Activated CD8-positive, alpha-beta memory T cell treated with anti-CD3 and anti-CD28 coated beads, Interleukin-2, amount 10 ng/mL, durations not matched to agents 7 days and 5 days (primary cell): ENCODE measurements at regions of chr1 and their contacts with region 1.

Region 1: GRCh38 chr1:66242646-66243547 is 291.1 kb upstream of the SGIP1 start:
- DNase-seq: peak; percentile 88
- ATAC-seq: peak; percentile 67
- H3K4me3 Mint-ChIP-seq: no peak overlapping the region
- H3K27ac Mint-ChIP-seq: no peak overlapping the region
- H3K4me1 Mint-ChIP-seq: peaks cover 21% of the 10 kb centered on the region
- H3K27me3 Mint-ChIP-seq: peaks cover 6% of the 10 kb centered on the region

Region 2: DNA sequence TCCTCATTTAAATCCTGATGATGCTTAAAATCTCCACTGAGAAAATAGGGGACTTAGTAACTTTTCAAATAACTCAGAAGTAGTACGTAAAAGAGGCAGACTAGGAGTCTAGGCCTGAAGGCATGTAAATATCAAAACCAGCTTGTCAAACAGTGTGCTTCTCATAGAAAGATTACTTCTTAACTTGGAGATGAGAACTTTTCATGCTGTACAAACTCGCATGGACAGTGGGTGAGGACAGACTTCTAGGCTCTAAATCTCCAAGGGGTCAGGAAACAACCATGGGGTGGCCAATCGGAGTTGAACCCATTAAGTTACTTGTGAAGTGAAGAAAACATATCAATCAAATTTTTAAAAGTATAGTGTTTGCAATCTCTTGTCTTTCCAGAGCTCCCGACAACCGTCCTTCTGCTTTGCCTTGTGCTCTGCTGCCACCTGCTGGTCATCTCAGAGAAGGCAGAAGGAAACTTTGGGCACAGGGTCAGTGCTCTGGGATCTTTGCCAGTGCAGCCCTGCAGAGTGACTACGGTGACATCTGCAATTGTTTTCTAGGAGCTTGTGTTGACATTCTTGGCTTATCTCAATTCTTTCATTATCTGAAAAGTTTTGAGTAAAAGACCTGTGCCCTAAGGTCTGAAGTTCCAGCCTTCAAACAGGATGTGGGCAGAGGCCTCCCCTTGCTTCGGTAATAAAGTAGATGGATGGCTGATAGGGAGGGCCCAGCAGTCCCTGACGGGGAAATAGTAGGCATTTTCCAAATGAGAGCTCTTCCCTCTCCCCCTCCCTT is 555.3 kb before region 1 on chr1:
- CTCF ChIA-PET with region 1: interaction called, 10 read pairs
- DNase-seq: peak; percentile 82
- ATAC-seq: peak; percentile 96
- H3K4me3 Mint-ChIP-seq: no peak overlapping the region
- H3K27ac Mint-ChIP-seq: peak overlapping the region; percentile 13
- H3K4me1 Mint-ChIP-seq: peaks cover 15% of the 10 kb centered on the region
- H3K27me3 Mint-ChIP-seq: peaks cover 35% of the 10 kb centered on the region

Region 3: GRCh38 chr1:65958561-65959350 is 284.1 kb before region 1 on chr1:
- CTCF ChIA-PET with region 1: interaction called, 148 read pairs
- DNase-seq: peak; percentile 43
- ATAC-seq: peak; percentile 83
- H3K4me3 Mint-ChIP-seq: no peak overlapping the region
- H3K27ac Mint-ChIP-seq: no peak overlapping the region
- H3K4me1 Mint-ChIP-seq: peaks cover 6% of the 10 kb centered on the region
- H3K27me3 Mint-ChIP-seq: peaks cover 6% of the 10 kb centered on the region

Region 4: GRCh38 chr1:66253330-66253921 is 10.5 kb after region 1 on chr1:
- CTCF ChIA-PET with region 1: interaction called, 38 read pairs
- DNase-seq: no peak
- ATAC-seq: peak; percentile 87
- H3K4me3 Mint-ChIP-seq: no peak overlapping the region
- H3K27ac Mint-ChIP-seq: no peak overlapping the region
- H3K4me1 Mint-ChIP-seq: peaks cover 77% of the 10 kb centered on the region
- H3K27me3 Mint-ChIP-seq: no peaks in the 10 kb centered on the region

Region 5: GRCh38 chr1:66276218-66276617 is 33.3 kb after region 1 on chr1:
- CTCF ChIA-PET with region 1: interaction called, 18 read pairs
- DNase-seq: peak; percentile 77
- ATAC-seq: peak; percentile 81
- H3K4me3 Mint-ChIP-seq: peak overlapping the region; percentile 52
- H3K27ac Mint-ChIP-seq: peak overlapping the region; percentile 79
- H3K4me1 Mint-ChIP-seq: peaks cover 93% of the 10 kb centered on the region
- H3K27me3 Mint-ChIP-seq: no peaks in the 10 kb centered on the region

Region 6: DNA sequence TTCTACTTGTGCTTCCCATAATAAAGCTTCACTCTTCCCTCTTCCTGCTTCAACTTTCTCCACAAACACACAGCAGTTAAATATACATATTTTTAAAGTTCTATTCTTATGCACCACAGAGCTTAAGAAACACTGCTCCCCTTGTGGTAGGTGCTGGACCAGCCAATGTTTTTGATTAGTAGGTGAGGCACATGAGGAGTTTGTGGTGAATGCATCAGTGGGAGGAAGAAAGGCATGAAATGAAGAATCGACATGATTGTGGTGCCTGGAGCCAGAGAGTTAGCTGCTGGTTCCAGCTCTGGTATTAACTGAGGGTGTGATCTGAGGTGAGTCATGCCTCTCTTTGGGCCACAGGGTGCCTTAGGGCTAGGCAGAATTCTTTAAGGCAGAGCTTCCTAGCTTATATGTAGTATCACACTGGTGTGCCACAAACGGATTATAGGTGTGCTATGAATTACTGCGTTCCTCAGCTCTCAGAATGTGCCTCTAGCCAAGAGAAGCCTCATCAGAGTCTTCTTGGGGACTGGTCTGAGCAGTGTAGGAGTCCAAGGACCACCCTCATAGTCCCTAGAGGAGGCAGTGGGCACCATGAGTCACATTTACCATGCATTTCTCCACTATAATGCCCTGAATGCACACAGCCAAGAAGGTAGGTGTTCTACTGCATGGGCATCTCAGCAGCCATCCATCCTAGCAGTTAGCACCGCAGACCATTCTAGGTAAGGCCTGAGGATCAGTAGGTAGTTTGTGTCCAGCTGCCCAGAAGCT is 193.7 kb after region 1 on chr1:
- CTCF ChIA-PET with region 1: interaction called, 406 read pairs
- DNase-seq: peak; percentile 81
- ATAC-seq: peak; percentile 86
- H3K4me3 Mint-ChIP-seq: peak overlapping the region; percentile 37
- H3K27ac Mint-ChIP-seq: peak overlapping the region; percentile 73
- H3K4me1 Mint-ChIP-seq: peaks cover 39% of the 10 kb centered on the region
- H3K27me3 Mint-ChIP-seq: no peaks in the 10 kb centered on the region

Region 7: GRCh38 chr1:66503841-66504470 is 261.1 kb after region 1 on chr1:
- CTCF ChIA-PET with region 1: interaction called, 13 read pairs
- DNase-seq: peak; percentile 56
- ATAC-seq: peak; percentile 55
- H3K4me3 Mint-ChIP-seq: no peak overlapping the region
- H3K27ac Mint-ChIP-seq: no peak overlapping the region
- H3K4me1 Mint-ChIP-seq: peaks cover 6% of the 10 kb centered on the region
- H3K27me3 Mint-ChIP-seq: peaks cover 49% of the 10 kb centered on the region